H1 (cell line): ENCODE measurements at regions of chr19 and their contacts with region 1.

Region 1: GRCh38 chr19:42048992-42049391 is 21.0 kb downstream of the GRIK5 start:
- DNase-seq: no peak
- H3K4me3 ChIP-seq: no peak overlapping the region
- H3K27ac ChIP-seq: no peak overlapping the region
- H3K4me1 ChIP-seq: no peaks in the 10 kb centered on the region
- H3K27me3 ChIP-seq: no peaks in the 10 kb centered on the region
- CTCF ChIP-seq: no peak
- EP300 ChIP-seq: no peak
- POLR2A ChIP-seq: no peak
- RAD21 ChIP-seq: no peak

Region 2: GRCh38 chr19:42038666-42039065 is 10.3 kb before region 1 on chr19:
- CTCF ChIA-PET with region 1: interaction called, 23 read pairs
- POLR2A ChIA-PET with region 1: interaction called, 12 read pairs
- DNase-seq: no peak
- H3K4me3 ChIP-seq: no peak overlapping the region
- H3K27ac ChIP-seq: no peak overlapping the region
- H3K4me1 ChIP-seq: no peaks in the 10 kb centered on the region
- H3K27me3 ChIP-seq: no peaks in the 10 kb centered on the region
- CTCF ChIP-seq: no peak
- EP300 ChIP-seq: no peak
- POLR2A ChIP-seq: no peak
- RAD21 ChIP-seq: no peak